OCI-LY7 (cell line): ENCODE measurements at regions of chr19 and their contacts with region 1.

Region 1: DNA sequence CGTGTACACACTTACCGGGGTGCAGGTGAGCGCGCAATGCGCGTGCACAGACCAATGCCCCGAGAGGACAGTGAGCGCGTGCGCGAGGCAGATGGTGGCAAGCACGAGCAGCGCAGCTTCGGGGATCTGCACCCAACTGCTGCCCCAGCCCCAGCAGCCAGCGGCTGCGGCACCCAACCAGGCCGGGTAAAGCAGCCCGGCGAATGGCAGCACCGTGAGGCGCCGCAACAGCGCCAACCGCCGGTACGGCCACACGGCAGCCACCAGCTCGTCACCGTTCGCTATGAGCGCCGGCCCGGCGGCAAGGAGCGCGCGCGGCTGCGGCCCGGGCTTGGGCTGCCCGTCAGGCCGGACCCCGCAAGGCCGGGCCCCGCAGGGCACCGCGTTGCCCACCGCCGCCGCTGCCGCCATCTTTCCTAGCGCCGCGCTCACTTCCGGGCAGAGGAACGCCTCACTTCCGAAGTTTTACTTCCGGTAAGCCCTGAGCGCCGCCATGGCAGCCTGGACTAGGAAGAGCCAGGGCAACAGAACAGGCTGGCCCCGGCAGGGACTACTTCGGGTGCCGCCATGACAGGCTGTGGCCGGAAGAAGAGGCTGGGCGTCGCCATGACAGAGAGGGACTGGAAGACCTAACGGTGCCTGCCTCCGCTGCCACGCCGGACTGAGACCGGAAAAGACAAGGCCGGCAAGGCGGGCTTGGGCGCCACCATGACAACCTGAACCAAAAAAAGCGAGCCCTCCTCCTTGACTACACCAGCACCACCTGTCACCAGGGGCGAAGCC is at the start of gene ATP13A1:
- DNase-seq: peak; percentile 98
- H3K4me3 ChIP-seq: peak within 1 kb of the TSS; percentile 88
- H3K27ac ChIP-seq: peak within 1 kb of the TSS; percentile 88
- H3K4me1 ChIP-seq: peaks cover 55% of the 10 kb centered on the region
- CTCF ChIP-seq: peak; percentile 49
- total RNA-seq, gene ATP13A1: 41.0 and 58.3 TPM in 2 replicates

Region 2: GRCh38 chr19:19155495-19156219 is 507.8 kb before region 1 on chr19:
- CTCF ChIA-PET with region 1: no interaction called
- POLR2A ChIA-PET with region 1: no interaction called
- intact Hi-C with region 1: loop called (anchors 10 kb)
- DNase-seq: peak; percentile 98
- H3K4me3 ChIP-seq: peak overlapping the region; percentile 59
- H3K27ac ChIP-seq: peak overlapping the region; percentile 98
- H3K4me1 ChIP-seq: peaks cover 96% of the 10 kb centered on the region
- CTCF ChIP-seq: no peak

Region 3: GRCh38 chr19:19606021-19606420 is 57.4 kb before region 1 on chr19:
- CTCF ChIA-PET with region 1: no interaction called
- POLR2A ChIA-PET with region 1: no interaction called
- intact Hi-C with region 1: no loop called
- DNase-seq: no peak
- H3K4me3 ChIP-seq: no peak overlapping the region
- H3K27ac ChIP-seq: no peak overlapping the region
- H3K4me1 ChIP-seq: peaks cover 3% of the 10 kb centered on the region
- CTCF ChIP-seq: no peak

Region 4: DNA sequence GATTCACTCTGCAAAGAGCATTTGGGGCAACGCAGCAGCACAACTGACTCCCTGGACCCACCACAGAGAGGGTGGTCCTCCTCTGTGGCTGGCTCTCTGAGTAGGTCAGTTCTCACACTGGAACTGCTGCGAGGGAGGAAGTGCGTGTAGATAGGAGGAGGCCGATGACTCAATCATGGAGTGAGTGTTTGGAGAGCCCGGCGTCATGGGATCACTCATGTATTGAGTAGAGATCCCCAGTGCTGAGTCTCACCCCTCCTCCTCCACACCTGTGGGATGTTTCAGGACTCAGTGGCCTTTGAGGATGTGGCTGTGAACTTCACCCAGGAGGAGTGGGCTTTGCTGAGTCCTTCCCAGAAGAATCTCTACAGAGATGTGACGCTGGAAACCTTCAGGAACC is 14.1 kb after region 1 on chr19:
- CTCF ChIA-PET with region 1: no interaction called
- POLR2A ChIA-PET with region 1: no interaction called
- intact Hi-C with region 1: no loop called
- DNase-seq: no peak
- H3K4me3 ChIP-seq: no peak overlapping the region
- H3K27ac ChIP-seq: no peak overlapping the region
- H3K4me1 ChIP-seq: no peaks in the 10 kb centered on the region
- CTCF ChIP-seq: no peak

Region 5: DNA sequence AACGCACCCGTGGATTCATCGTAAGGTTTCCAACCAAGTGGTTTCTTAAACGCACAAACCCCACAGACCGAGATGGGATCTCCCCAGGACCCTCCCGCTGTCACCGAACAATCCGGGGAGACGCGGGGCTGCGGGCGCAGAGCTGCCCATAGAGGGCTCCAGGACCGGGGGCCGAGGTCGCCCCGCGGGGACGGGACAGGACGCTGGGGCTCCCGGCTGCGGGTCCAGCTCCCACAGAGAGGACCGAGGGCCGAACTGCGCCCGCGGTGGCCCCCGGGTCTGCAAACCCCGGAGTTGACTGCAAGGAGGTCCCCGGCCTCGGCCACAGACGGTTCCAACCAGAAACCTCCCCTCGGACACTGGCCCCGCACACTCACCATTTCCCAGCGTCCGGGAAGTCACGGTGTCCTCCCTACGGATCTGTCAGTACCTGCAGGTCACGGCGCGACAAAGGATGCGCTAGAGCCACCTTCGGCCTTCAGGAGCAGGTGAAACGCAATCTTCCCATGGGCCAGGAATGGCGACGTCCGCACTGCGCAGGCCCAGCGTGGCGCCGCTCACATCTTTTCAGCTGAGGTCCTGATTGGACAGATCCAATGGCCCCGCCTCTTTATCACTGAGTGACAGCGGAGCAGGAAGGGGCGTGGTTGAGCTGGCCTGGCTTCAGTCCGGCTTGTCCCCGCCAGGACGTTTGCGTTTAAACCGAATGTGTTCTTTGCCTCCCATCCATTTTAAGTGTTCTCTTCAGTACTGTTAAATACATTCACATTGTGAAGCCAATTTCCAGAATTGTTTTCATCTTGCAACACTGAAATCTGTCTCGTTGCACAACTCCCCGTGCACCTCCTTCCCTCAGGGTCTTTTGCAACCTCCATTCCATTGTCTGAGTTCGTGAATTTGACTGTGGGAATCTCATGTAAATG is 69.4 kb after region 1 on chr19 and contains the start of gene ZNF14:
- CTCF ChIA-PET with region 1: no interaction called
- POLR2A ChIA-PET with region 1: interaction called, 6 read pairs
- intact Hi-C with region 1: loop called (anchors 5 kb)
- DNase-seq: peak; percentile 98
- H3K4me3 ChIP-seq: peak within 1 kb of the TSS; percentile 84
- H3K27ac ChIP-seq: peak within 1 kb of the TSS; percentile 39
- H3K4me1 ChIP-seq: peaks cover 10% of the 10 kb centered on the region
- CTCF ChIP-seq: peak; percentile 46; the same call in 1 of the 2 replicates
- total RNA-seq, gene ZNF14: 4.5 and 8.7 TPM in 2 replicates

Region 6: DNA sequence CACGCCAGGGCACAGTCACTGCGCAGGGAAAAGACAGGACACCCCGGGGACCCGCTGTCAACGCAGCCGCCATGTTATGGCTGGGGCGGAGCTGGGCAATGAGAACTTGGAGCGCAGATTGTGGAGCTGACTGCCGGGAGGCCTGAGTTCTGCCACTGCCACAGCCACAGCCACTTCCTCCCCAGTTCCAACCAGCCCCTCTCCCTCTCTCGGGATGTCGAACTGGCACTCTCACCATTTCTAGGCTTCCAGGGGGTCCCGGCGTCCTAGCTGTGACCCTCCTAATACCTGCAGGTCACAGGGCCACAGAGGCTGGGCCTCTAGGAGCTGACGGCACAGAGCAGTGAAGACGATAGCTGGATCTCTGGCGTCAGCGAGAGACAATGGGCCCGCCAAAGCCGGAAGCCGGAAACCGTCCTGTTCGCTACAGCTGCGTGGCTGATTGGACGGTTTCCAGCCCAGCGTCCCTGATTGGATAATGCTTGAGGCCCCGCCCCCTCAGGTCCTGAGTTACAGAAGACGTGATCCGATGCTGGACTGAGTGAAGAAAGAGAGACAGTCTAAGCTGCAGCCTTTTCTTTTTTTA is 158.0 kb after region 1 on chr19 and contains the start of gene ZNF506:
- CTCF ChIA-PET with region 1: no interaction called
- POLR2A ChIA-PET with region 1: interaction called, 3 read pairs
- intact Hi-C with region 1: loop called (anchors 2 kb)
- DNase-seq: peak; percentile 99
- H3K4me3 ChIP-seq: peak within 1 kb of the TSS; percentile 87
- H3K27ac ChIP-seq: peak within 1 kb of the TSS; percentile 76
- H3K4me1 ChIP-seq: peaks cover 4% of the 10 kb centered on the region
- CTCF ChIP-seq: no peak
- total RNA-seq, gene ZNF506: 22.1 and 36.4 TPM in 2 replicates

Region 7: DNA sequence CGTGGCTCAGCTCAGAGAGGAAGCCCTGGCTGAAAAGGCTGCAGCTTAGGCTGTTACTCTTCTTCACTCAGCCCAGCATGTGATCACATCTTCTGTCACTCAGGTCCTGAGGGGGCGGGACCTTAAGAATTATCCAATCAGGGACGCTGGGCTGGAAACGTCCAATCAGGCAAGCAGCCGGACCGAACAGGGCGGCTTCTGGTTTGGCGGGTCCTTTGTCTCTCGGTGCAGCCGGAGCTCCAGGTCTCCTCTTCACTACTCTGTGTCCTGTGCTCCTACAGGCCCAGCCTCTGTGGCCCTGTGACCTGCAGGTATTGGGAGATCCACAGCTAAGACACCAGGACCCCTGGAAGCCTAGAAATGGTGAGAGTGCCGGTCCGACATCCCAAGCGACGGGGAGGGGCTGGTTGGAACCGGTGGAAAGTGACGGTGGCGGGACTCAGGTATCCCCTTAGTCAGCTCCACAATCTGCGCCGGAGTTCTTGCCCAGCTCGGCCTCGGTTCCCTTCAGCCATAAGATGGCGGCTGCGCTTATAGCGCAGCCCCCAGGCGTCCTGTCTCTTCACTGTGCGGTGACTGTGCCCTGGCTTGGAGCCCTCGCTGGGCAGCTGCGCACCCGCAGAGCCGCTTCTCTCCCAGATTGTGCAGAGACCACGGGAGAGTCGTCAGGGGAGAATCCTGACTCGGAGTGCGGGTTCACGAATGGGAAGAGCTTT is 237.4 kb after region 1 on chr19 and contains the start of gene ZNF93:
- CTCF ChIA-PET with region 1: no interaction called
- POLR2A ChIA-PET with region 1: interaction called, 3 read pairs
- intact Hi-C with region 1: loop called (anchors 5 kb)
- DNase-seq: peak; percentile 98
- H3K4me3 ChIP-seq: peak within 1 kb of the TSS; percentile 98
- H3K27ac ChIP-seq: peak within 1 kb of the TSS; percentile 53
- H3K4me1 ChIP-seq: peaks cover 12% of the 10 kb centered on the region
- CTCF ChIP-seq: no peak
- total RNA-seq, gene ZNF93: 17.5 and 18.5 TPM in 2 replicates